HepG2 (cell line): ENCODE measurements at regions of chr20 and their contacts with region 1.

Region 1: GRCh38 chr20:36605399-36606157 is at the start of gene RAB5IF:
- DNase-seq: peak; percentile 99
- ATAC-seq: peak; percentile 94
- H3K4me3 ChIP-seq: peak within 1 kb of the TSS; percentile 88 to 98 (median 98)
- H3K27ac ChIP-seq: peak within 1 kb of the TSS; percentile 81
- H3K4me1 ChIP-seq: peaks cover 27% of the 10 kb centered on the region
- H3K27me3 ChIP-seq: no peaks in the 10 kb centered on the region; a peak in 1 of 5 replicates
- CTCF ChIP-seq: peak; percentile 100
- EP300 ChIP-seq: peak; percentile 59 to 80
- POLR2A ChIP-seq: peak; percentile 99 to 100
- RAD21 ChIP-seq: peak; percentile 96
- total RNA-seq, gene RAB5IF: 292 and 305 TPM in 2 replicates

Region 2: DNA sequence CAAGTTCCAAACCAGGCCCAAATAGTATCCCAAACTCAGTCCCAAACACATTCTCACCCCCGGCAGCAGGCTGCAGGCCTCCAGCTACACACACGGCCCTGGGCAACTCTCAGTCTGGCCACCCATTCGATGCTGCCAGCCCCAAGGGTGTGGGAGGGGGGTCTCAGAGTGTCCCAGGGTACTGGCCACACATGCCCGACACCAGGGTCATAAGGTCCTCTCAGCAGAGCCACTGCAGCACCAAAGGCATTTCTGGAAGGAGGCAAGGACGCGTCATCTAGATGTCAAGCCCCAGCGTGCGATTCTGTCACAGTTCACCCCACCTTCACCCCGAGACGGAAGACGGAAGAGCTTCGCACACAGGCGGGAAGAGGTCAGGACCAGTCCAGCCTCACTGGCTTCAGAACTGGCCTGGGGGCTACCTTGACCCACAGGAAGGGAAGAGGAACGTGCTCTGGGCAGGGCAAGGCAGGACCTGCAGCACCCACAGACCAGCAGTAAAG is 54.7 kb before region 1 on chr20:
- CTCF ChIA-PET with region 1: interaction called, 15 read pairs
- POLR2A ChIA-PET with region 1: interaction called, 4 read pairs
- in situ Hi-C with region 1: no loop called
- intact Hi-C with region 1: loop called (anchors 2 kb)
- DNase-seq: no peak
- ATAC-seq: no peak
- H3K4me3 ChIP-seq: no peak overlapping the region; a peak in 1 of 6 replicates
- H3K27ac ChIP-seq: no peak overlapping the region
- H3K4me1 ChIP-seq: peaks cover 51% of the 10 kb centered on the region
- H3K27me3 ChIP-seq: no peaks in the 10 kb centered on the region
- CTCF ChIP-seq: no peak
- EP300 ChIP-seq: no peak
- POLR2A ChIP-seq: no peak
- RAD21 ChIP-seq: no peak

Region 3: DNA sequence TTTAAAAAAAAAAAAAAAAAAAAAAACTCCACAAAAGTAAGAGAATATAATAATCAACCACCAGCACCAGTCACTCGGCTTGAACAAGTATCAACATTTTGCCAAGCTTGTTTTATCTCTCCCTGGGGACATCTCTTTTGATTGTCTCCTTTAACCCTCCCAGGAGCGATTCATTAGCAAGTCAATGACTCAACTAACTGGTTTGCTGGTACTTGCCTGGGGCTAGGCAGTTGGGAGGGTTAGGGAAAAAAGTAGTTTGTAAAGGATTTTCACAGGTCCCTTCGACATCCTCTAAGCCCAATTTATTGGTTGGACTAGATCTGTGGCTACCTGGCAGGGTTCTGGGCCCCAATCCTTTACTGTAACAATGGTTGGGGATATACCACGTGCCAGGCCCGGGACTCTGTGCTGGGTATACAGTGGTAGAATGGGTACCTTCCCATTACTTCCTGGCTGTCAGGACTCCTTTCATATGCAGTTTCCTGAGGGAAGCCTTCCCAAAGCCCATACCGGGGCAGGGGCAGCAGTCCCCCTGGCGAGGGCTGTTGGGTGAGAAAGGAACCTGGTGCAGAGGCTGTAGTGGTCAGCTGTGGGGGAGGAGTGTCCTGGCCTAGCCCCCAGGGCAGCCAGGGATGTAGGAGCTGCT is 20.0 kb before region 1 on chr20:
- CTCF ChIA-PET with region 1: no interaction called
- POLR2A ChIA-PET with region 1: interaction called, 23 read pairs
- in situ Hi-C with region 1: no loop called
- intact Hi-C with region 1: no loop called
- DNase-seq: no peak
- ATAC-seq: peak; percentile 6; the same call in 1 of the 3 replicates
- H3K4me3 ChIP-seq: no peak overlapping the region
- H3K27ac ChIP-seq: no peak overlapping the region
- H3K4me1 ChIP-seq: no peaks in the 10 kb centered on the region
- H3K27me3 ChIP-seq: no peaks in the 10 kb centered on the region
- CTCF ChIP-seq: no peak
- EP300 ChIP-seq: no peak
- POLR2A ChIP-seq: no peak
- RAD21 ChIP-seq: no peak

Region 4: GRCh38 chr20:36624068-36624943 is 18.7 kb after region 1 on chr20:
- CTCF ChIA-PET with region 1: no interaction called
- POLR2A ChIA-PET with region 1: interaction called, 52 read pairs
- in situ Hi-C with region 1: no loop called
- intact Hi-C with region 1: no loop called
- DNase-seq: peak; percentile 49
- ATAC-seq: peak; percentile 94
- H3K4me3 ChIP-seq: peak overlapping the region; percentile 4 to 42 (median 20); a peak in 3 of 6 replicates
- H3K27ac ChIP-seq: peak overlapping the region; percentile 18
- H3K4me1 ChIP-seq: peaks cover 37% of the 10 kb centered on the region
- H3K27me3 ChIP-seq: no peaks in the 10 kb centered on the region
- CTCF ChIP-seq: peak; percentile 61
- EP300 ChIP-seq: no peak
- POLR2A ChIP-seq: 0 out of 4 replicates have a peak, but pooled peaks of 1 of the 2 experiments have one; percentile 42
- RAD21 ChIP-seq: no peak

Region 5: GRCh38 chr20:36645998-36646397 is 40.4 kb after region 1 on chr20 and contains the start of gene SLA2:
- CTCF ChIA-PET with region 1: no interaction called
- POLR2A ChIA-PET with region 1: interaction called, 28 read pairs
- in situ Hi-C with region 1: no loop called
- intact Hi-C with region 1: no loop called
- DNase-seq: no peak
- ATAC-seq: no peak
- H3K4me3 ChIP-seq: no peak within 1 kb of the TSS
- H3K27ac ChIP-seq: peak within 1 kb of the TSS; percentile 59
- H3K4me1 ChIP-seq: peaks cover 82% of the 10 kb centered on the region
- H3K27me3 ChIP-seq: no peaks in the 10 kb centered on the region
- CTCF ChIP-seq: no peak
- EP300 ChIP-seq: no peak
- POLR2A ChIP-seq: no peak
- RAD21 ChIP-seq: no peak
- total RNA-seq, gene SLA2: 1.6 and 1.8 TPM in 2 replicates

Region 6: DNA sequence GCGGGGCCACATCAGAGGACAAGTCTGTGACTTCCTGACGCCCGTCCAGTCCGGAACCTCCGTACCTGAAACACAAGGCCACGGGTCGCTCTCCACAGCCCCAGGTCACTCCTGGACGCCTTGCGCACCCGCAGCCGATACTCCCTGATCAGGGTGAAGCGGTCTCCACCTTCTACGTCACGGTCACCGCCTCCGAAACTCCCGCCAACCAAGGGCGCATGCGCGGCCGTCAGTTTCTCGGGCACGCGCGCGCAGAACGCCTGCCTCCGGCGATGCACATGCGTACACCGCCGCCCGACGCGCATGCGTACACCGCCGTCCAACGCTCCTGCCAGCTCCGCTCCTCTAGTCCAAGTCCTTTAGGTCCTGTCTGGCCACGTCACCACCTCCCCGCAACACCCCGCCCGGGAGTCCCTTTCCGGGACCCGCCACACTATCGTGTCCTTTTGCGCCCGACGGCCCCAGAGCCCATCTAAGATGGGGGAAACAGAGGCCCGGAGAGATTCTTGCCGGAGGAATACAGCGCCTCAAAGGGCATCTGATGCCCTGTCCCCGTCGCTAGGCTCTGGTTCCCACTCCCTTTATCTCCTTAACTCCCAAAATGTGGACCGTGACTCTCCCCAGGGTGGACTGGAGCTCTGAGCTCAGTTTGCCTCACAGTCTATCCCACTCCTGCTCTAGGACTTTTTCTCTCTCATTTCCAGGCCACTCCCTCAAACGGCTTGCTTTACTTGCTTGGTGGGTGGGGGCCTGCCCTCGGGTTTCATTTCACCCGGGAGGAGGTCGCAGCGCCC is 168.2 kb after region 1 on chr20 and contains the start of gene DSN1:
- CTCF ChIA-PET with region 1: no interaction called
- POLR2A ChIA-PET with region 1: interaction called, 10 read pairs
- in situ Hi-C with region 1: no loop called
- intact Hi-C with region 1: no loop called
- DNase-seq: peak; percentile 98
- ATAC-seq: peak; percentile 87
- H3K4me3 ChIP-seq: peak within 1 kb of the TSS; percentile 67 to 99 (median 92)
- H3K27ac ChIP-seq: peak within 1 kb of the TSS; percentile 94
- H3K4me1 ChIP-seq: peaks cover 34% of the 10 kb centered on the region
- H3K27me3 ChIP-seq: peaks cover 0 to 2% of the 10 kb centered on the region in 2 experiments; a peak in 2 of 5 replicates
- CTCF ChIP-seq: no peak; the same call in 1 of the 2 replicates
- EP300 ChIP-seq: no peak; a peak in 1 of 4 replicates
- POLR2A ChIP-seq: peak; percentile 85 to 94
- RAD21 ChIP-seq: peak; percentile 82
- total RNA-seq, gene DSN1: 53.7 and 82.4 TPM in 2 replicates